Endothelial cell of umbilical vein (primary cell): ENCODE measurements at regions of chr6 and their contacts with region 1.

Region 1: GRCh38 chr6:84764332-84765049 is at the start of gene TBX18:
- DNase-seq: peak; percentile 99
- H3K4me3 ChIP-seq: peak within 1 kb of the TSS; percentile 63 to 95 (median 68)
- H3K27ac ChIP-seq: peak within 1 kb of the TSS; percentile 79
- H3K4me1 ChIP-seq: peaks cover 34% of the 10 kb centered on the region
- H3K27me3 ChIP-seq: peaks cover 27 to 38% of the 10 kb centered on the region in 2 experiments
- CTCF ChIP-seq: peak in 1 of 2 donors; percentile 25
- POLR2A ChIP-seq: peak; percentile 88
- total RNA-seq, gene TBX18: 28.4 and 35.3 TPM in 2 replicates

Region 2: DNA sequence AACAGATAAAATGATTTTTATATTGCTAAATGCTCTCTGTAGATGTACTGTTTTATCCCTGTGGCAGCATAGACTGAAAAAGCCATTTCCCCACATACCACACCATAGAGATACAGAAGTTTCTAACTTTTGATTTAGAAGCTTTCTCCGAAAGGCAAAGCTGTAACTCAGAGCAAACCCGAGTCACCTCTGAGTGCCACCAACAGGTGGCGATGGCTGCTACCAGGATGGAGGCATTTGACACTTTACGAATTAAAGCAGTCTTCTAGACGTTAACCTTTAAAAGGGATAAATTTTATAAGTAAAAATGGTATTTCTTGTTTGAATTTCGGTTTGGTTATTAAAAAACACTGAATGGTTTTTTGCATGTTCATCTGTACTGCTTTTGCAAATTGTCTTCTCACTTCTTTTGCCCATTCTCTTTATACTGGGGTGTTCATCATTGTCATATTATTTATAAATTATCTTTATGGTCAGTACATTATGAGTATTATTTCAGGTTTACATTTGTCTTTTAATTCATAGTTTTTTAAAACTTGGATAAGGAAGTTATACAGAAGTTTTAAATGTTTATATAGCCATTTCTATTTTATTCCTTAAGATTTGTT is 336.1 kb before region 1 on chr6:
- CTCF ChIA-PET with region 1: interaction called, 170 read pairs
- POLR2A ChIA-PET with region 1: interaction called, 3 read pairs
- dilution Hi-C with region 1: no loop called
- intact Hi-C with region 1: loop called (anchors 1 kb)
- DNase-seq: peak; percentile 82
- H3K4me3 ChIP-seq: no peak overlapping the region
- H3K27ac ChIP-seq: no peak overlapping the region
- H3K4me1 ChIP-seq: no peaks in the 10 kb centered on the region
- H3K27me3 ChIP-seq: no peaks in the 10 kb centered on the region
- CTCF ChIP-seq: peak; percentile 86 to 88
- POLR2A ChIP-seq: no peak

Region 3: GRCh38 chr6:84652356-84653026 is 112.0 kb before region 1 on chr6:
- CTCF ChIA-PET with region 1: interaction called, 7 read pairs
- POLR2A ChIA-PET with region 1: no interaction called
- dilution Hi-C with region 1: no loop called
- intact Hi-C with region 1: loop called (anchors 1 kb)
- DNase-seq: peak; percentile 96
- H3K4me3 ChIP-seq: peak overlapping the region in 1 of 3 experiments; percentile 13
- H3K27ac ChIP-seq: peak overlapping the region; percentile 97
- H3K4me1 ChIP-seq: peaks cover 36% of the 10 kb centered on the region
- H3K27me3 ChIP-seq: no peaks in the 10 kb centered on the region
- CTCF ChIP-seq: no peak
- POLR2A ChIP-seq: peak; percentile 56

Region 4: DNA sequence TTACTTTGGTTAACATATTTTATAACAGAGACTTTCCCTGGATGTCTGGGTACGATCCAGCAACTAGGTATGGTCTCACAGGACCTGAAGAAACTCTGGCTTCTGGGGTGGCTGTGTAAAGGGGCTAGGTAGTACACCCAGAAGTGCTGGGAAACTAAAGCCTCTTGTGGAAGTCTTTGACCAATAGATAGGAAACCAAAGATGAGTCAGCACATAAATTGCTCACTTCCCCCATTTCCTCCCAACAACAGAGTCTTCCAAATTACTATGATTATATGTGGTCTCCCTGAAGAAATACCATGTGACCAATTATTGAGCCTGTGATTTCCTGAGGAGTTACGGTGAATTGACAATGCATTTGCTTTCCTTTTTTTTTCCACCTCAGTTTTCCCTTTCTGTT is 26.7 kb after region 1 on chr6:
- CTCF ChIA-PET with region 1: interaction called, 5 read pairs
- POLR2A ChIA-PET with region 1: no interaction called
- dilution Hi-C with region 1: no loop called
- intact Hi-C with region 1: loop called (anchors 1 kb)
- DNase-seq: peak; percentile 91
- H3K4me3 ChIP-seq: peak overlapping the region in 1 of 3 experiments; percentile 27
- H3K27ac ChIP-seq: peak overlapping the region; percentile 70
- H3K4me1 ChIP-seq: peaks cover 21% of the 10 kb centered on the region
- H3K27me3 ChIP-seq: no peaks in the 10 kb centered on the region
- CTCF ChIP-seq: no peak
- POLR2A ChIP-seq: no peak

Region 5: DNA sequence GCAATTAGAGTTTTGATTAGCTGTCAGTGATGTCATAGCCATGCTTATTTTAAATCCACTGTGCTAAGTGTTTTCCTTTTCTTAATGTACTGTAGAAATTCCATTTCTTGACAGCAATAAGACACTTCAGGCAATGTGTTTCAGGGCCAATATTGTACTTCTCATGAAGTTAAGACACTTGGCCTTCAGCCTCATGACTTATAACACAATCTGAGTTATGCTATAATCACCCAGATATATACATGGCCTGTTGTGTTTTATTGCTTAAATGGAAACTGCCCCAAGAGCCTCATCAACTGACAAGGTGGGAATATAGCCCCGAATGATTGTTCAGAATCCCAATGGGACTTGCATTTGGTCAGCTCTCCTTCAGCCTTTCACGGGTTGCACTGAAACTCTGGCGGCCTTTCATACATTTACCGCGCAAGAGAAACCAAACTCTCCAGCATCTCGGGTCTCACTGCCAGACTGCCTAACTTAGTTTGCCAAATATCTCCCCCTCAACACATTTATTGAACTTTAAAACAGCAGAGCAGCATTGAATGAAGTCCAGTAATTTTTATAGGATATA is 44.1 kb after region 1 on chr6:
- CTCF ChIA-PET with region 1: no interaction called
- POLR2A ChIA-PET with region 1: no interaction called
- dilution Hi-C with region 1: no loop called
- intact Hi-C with region 1: no loop called
- DNase-seq: no peak
- H3K4me3 ChIP-seq: no peak overlapping the region
- H3K27ac ChIP-seq: no peak overlapping the region
- H3K4me1 ChIP-seq: peaks cover 13% of the 10 kb centered on the region
- H3K27me3 ChIP-seq: peaks cover 2 to 17% of the 10 kb centered on the region in 2 experiments
- CTCF ChIP-seq: no peak
- POLR2A ChIP-seq: no peak

Region 6: GRCh38 chr6:85126485-85127167 is 362.1 kb after region 1 on chr6:
- CTCF ChIA-PET with region 1: interaction called, 7 read pairs
- POLR2A ChIA-PET with region 1: no interaction called
- dilution Hi-C with region 1: no loop called
- intact Hi-C with region 1: loop called (anchors 2 kb)
- DNase-seq: peak; percentile 75
- H3K4me3 ChIP-seq: no peak overlapping the region
- H3K27ac ChIP-seq: no peak overlapping the region
- H3K4me1 ChIP-seq: no peaks in the 10 kb centered on the region
- H3K27me3 ChIP-seq: peaks cover 14 to 17% of the 10 kb centered on the region in 2 experiments
- CTCF ChIP-seq: peak; percentile 72 to 89
- POLR2A ChIP-seq: no peak

Region 7: GRCh38 chr6:85642774-85643536 is 878.5 kb after region 1 on chr6 and contains the start of gene SYNCRIP:
- CTCF ChIA-PET with region 1: no interaction called
- POLR2A ChIA-PET with region 1: no interaction called
- dilution Hi-C with region 1: no loop called
- intact Hi-C with region 1: loop called (anchors 5 kb)
- DNase-seq: peak; percentile 99
- H3K4me3 ChIP-seq: peak within 1 kb of the TSS; percentile 87 to 91 (median 90)
- H3K27ac ChIP-seq: peak within 1 kb of the TSS; percentile 100
- H3K4me1 ChIP-seq: peaks cover 27% of the 10 kb centered on the region
- H3K27me3 ChIP-seq: no peaks in the 10 kb centered on the region
- CTCF ChIP-seq: no peak
- POLR2A ChIP-seq: peak; percentile 97
- total RNA-seq, gene SYNCRIP: 150 and 155 TPM in 2 replicates